Activated naive CD4-positive, alpha-beta T cell treated with anti-CD3 and anti-CD28 coated beads for 36 hours (primary cell): ENCODE measurements at regions of chr7 and their contacts with region 1.

Region 1: DNA sequence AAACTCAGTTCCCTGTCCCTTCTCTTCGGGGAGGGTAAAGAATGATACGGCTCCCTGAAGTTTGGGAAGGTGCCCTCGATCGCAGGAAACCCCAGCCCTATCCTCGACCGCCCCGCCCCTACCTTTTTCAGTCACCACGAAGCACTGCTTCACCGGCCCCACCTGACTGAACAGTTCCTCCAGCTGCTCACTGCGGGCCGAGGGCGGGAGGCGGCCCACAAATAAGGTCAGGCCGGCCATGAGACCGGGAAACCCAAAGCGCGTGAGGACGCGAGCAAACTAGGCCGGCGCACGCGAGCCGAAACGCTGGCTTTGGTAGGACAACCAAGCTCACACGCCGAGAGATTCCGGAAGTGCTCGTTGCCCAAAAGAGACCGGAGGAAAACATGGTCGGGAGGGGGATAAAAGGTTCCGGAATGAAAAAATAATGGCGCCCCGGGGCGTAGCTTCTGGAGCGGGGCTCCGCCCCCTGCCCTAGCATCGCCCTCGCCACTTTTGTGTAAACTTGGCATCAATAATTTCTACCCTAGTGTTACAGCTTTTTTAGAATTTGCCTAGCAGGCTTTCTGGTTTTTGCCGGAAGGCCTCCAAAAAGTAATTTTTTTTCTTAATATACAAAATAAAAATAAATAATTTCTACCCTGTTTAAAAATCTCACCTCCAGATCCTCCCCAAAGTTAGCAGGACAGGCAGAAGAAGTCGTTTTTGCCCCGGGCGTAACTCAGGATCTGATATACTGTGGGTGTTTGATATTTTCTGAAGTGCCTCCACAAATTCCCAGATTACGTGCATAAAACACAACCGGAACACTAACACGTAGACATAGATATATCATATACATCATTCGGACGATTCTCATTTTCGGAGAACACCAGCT is at the start of gene RBM28:
- DNase-seq: peak; percentile 88
- H3K4me3 Mint-ChIP-seq: peak within 1 kb of the TSS; percentile 98
- H3K27ac Mint-ChIP-seq: peak within 1 kb of the TSS; percentile 89
- H3K4me1 Mint-ChIP-seq: peaks cover 24% of the 10 kb centered on the region
- H3K27me3 Mint-ChIP-seq: no peaks in the 10 kb centered on the region
- total RNA-seq, gene RBM28: 51.9 to 53.2 TPM

Region 2: GRCh38 chr7:127585044-127585953 is 758.5 kb before region 1 on chr7 and contains the start of gene GCC1:
- CTCF ChIA-PET with region 1: no interaction called
- intact Hi-C with region 1: loop called (anchors 1 kb)
- DNase-seq: peak; percentile 94
- H3K4me3 Mint-ChIP-seq: peak within 1 kb of the TSS; percentile 89
- H3K27ac Mint-ChIP-seq: peak within 1 kb of the TSS; percentile 70
- H3K4me1 Mint-ChIP-seq: peaks cover 66% of the 10 kb centered on the region
- H3K27me3 Mint-ChIP-seq: no peaks in the 10 kb centered on the region
- total RNA-seq, gene GCC1: 11.0 to 12.0 TPM

Region 3: GRCh38 chr7:127632280-127632791 is 711.5 kb before region 1 on chr7:
- CTCF ChIA-PET with region 1: no interaction called
- intact Hi-C with region 1: no loop called
- DNase-seq: no peak
- H3K4me3 Mint-ChIP-seq: no peak overlapping the region
- H3K27ac Mint-ChIP-seq: no peak overlapping the region
- H3K4me1 Mint-ChIP-seq: peaks cover 6% of the 10 kb centered on the region
- H3K27me3 Mint-ChIP-seq: peaks cover 8% of the 10 kb centered on the region

Region 4: GRCh38 chr7:128361411-128362379 is 17.9 kb after region 1 on chr7 and contains the start of gene PRRT4:
- CTCF ChIA-PET with region 1: interaction called, 6 read pairs
- intact Hi-C with region 1: loop called (anchors 1 kb)
- DNase-seq: peak; percentile 42
- H3K4me3 Mint-ChIP-seq: peak within 1 kb of the TSS; percentile 73
- H3K27ac Mint-ChIP-seq: no peak within 1 kb of the TSS
- H3K4me1 Mint-ChIP-seq: peaks cover 22% of the 10 kb centered on the region
- H3K27me3 Mint-ChIP-seq: peaks cover 46% of the 10 kb centered on the region
- total RNA-seq, gene PRRT4: 0.40 TPM in 1 of 2 experiments, not detected in the other

Region 5: DNA sequence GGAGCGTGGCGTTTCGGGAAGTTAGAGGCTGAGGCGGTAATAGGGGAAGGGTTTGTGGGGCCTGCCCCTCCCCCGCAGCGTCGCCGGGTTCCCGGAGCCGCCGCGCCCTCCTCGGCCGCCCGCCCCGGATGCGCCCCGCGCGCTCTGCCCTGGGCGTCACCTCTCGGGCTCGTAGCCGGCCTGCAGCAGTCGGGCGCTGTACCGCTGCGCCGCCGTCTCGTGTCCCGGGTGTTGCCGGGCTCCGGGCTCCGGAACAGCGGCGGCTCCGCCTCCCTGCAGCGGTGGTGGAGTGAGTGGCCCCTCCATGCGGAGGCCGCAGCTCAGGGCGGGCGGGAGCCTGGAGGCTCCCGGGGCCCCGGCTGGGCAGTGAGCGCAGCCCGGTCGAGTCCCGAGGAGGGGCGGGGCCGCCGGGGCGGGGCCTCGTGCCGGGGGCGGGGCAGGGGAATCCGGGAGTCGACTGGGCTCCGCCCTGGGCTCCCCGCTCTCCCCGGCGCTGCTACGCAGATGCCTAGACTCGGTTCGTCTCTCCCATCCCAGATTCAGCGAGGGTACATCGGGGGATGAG is 65.9 kb after region 1 on chr7 and contains the start of gene IMPDH1:
- CTCF ChIA-PET with region 1: interaction called, 5 read pairs
- intact Hi-C with region 1: loop called (anchors 1 kb)
- DNase-seq: peak; percentile 86
- H3K4me3 Mint-ChIP-seq: peak within 1 kb of the TSS; percentile 85
- H3K27ac Mint-ChIP-seq: peak within 1 kb of the TSS; percentile 47
- H3K4me1 Mint-ChIP-seq: peaks cover 20% of the 10 kb centered on the region
- H3K27me3 Mint-ChIP-seq: peaks cover 2% of the 10 kb centered on the region
- total RNA-seq, gene IMPDH1: 44.3 to 45.9 TPM

Region 6: DNA sequence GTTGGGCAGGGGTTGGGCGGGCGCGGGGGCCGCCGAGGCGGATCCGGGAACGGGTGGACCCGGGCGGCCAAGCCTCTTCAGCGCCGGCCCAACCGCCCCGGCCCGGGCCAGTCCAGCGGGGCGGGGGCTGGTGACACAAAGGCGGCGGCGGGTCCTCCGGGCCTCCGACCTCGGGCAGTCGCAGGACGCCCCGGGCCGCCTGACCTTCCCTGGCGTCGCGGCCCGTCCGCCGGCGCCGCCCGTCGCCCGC is 187.0 kb after region 1 on chr7:
- CTCF ChIA-PET with region 1: no interaction called
- intact Hi-C with region 1: loop called (anchors 5 kb)
- DNase-seq: no peak
- H3K4me3 Mint-ChIP-seq: no peak overlapping the region
- H3K27ac Mint-ChIP-seq: no peak overlapping the region
- H3K4me1 Mint-ChIP-seq: peaks cover 32% of the 10 kb centered on the region
- H3K27me3 Mint-ChIP-seq: no peaks in the 10 kb centered on the region